Gastrocnemius medialis (tissue), 4 donors: ENCODE measurements at regions of chr3 and their contacts with region 1.

Region 1: DNA sequence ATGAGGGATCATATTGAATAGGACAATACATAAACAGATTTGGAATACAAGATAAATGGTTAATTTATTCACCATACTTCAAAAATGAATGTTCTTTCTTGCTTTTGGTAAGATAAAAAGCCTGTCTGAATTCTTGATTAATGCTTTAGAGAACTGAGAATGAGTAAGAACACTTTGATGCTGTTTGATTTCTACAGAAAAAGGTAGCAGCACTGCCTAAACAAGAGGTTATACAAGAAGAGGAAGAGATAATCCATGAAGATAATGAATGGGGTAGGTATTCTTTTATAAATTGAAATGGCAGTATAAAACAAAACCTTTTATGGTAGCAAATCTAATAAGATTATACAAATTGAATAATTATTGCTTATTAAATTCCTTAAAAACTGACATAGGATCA is 15.3 kb downstream of the UBA5 start:
- DNase-seq: no peak
- ATAC-seq: no peak
- H3K4me3 ChIP-seq: no peak overlapping the region
- H3K27ac ChIP-seq: no peak overlapping the region
- H3K4me1 ChIP-seq: no peaks in the 10 kb centered on the region
- H3K27me3 ChIP-seq: no peaks in the 10 kb centered on the region
- CTCF ChIP-seq: no peak
- POLR2A ChIP-seq: no peak

Region 2: GRCh38 chr3:132399054-132399929 is 276.1 kb before region 1 on chr3:
- in situ Hi-C with region 1: no loop called
- intact Hi-C with region 1: no loop called
- DNase-seq: no peak
- ATAC-seq: no peak
- H3K4me3 ChIP-seq: no peak overlapping the region
- H3K27ac ChIP-seq: no peak overlapping the region
- H3K4me1 ChIP-seq: no peaks in the 10 kb centered on the region
- H3K27me3 ChIP-seq: no peaks in the 10 kb centered on the region
- CTCF ChIP-seq: peak; percentile 15 to 65 (median 50)
- POLR2A ChIP-seq: no peak

Region 3: GRCh38 chr3:132469326-132469725 is 206.1 kb before region 1 on chr3:
- in situ Hi-C with region 1: no loop called
- intact Hi-C with region 1: no loop called
- DNase-seq: no peak
- ATAC-seq: no peak
- H3K4me3 ChIP-seq: no peak overlapping the region
- H3K27ac ChIP-seq: no peak overlapping the region
- H3K4me1 ChIP-seq: no peaks in the 10 kb centered on the region
- H3K27me3 ChIP-seq: no peaks in the 10 kb centered on the region
- CTCF ChIP-seq: no peak
- POLR2A ChIP-seq: no peak

Region 4: DNA sequence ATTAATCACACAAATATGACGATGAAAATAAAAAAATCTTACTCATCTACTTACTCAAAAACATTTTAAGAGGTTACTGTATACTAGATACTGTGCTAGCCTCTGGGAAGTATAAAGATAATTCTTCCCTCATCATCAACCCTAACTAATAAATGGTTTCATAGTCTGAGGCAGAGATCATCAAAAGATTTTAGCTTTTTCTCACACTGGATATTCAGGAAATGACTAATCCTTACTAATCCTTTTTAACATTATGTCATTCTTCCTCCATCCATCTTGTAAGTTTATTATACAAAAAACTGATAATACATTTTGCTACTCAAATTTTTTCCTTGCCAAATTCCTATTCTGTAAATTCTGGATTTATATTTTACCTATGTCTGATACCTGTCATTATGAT is 45.5 kb before region 1 on chr3:
- in situ Hi-C with region 1: no loop called
- intact Hi-C with region 1: no loop called
- DNase-seq: no peak
- ATAC-seq: no peak
- H3K4me3 ChIP-seq: no peak overlapping the region
- H3K27ac ChIP-seq: no peak overlapping the region
- H3K4me1 ChIP-seq: no peaks in the 10 kb centered on the region
- H3K27me3 ChIP-seq: no peaks in the 10 kb centered on the region
- CTCF ChIP-seq: no peak
- POLR2A ChIP-seq: no peak

Region 5: DNA sequence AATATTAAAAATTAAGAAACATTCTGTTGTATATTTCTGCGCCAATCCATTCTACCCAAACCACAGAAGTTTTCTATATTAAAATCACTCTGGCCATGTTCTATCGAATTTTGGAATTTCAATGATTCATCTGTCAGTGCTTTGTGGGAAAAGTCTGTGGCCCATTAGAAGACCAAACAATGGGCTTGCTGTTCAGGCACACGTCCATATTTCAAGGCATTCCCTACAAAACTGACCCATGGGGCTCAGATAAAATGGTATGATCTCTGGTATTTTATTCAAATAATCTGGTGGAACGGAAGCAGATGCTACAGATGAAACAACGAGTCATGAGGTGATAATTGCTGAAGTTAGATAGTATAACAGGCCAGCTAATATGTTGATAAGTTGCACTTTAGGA is 34.4 kb after region 1 on chr3:
- in situ Hi-C with region 1: no loop called
- intact Hi-C with region 1: loop called (anchors 5 kb)
- DNase-seq: no peak
- ATAC-seq: no peak
- H3K4me3 ChIP-seq: no peak overlapping the region
- H3K27ac ChIP-seq: no peak overlapping the region
- H3K4me1 ChIP-seq: peaks cover 0 to 4% of the 10 kb centered on the region in 2 donors
- H3K27me3 ChIP-seq: no peaks in the 10 kb centered on the region
- CTCF ChIP-seq: no peak
- POLR2A ChIP-seq: no peak

Region 6: DNA sequence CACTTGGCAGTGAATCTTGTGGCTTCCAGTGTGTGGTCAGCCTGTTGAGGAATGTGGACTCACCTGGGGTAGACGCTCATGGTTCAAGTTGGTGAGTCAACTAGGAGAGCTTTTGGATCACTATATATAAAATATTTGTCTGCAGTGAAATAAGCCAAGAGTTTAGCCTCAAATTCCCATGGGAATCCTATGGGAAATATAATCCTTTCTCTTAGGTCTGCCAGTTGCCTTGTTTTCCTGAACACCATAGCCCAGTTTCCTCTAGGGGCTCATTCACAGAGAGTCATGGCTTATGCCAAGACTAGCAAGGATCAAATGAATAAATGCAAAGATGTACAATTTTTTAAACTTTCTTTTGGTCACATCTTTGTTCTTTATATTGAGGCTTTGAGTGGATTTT is 146.9 kb after region 1 on chr3:
- in situ Hi-C with region 1: no loop called
- intact Hi-C with region 1: no loop called
- DNase-seq: no peak
- ATAC-seq: no peak
- H3K4me3 ChIP-seq: no peak overlapping the region
- H3K27ac ChIP-seq: no peak overlapping the region
- H3K4me1 ChIP-seq: no peaks in the 10 kb centered on the region
- H3K27me3 ChIP-seq: no peaks in the 10 kb centered on the region
- CTCF ChIP-seq: no peak
- POLR2A ChIP-seq: no peak